ENCODE measurements at regions of chr19 and their contacts with region 1.

Region 1: GRCh38 chr19:24086974-24087595 is at the start of gene ZNF254:
- DNase-seq: peak; percentile 94
- H3K4me3 Mint-ChIP-seq: peak within 1 kb of the TSS; percentile 96
- H3K27ac Mint-ChIP-seq: peak within 1 kb of the TSS; percentile 96
- H3K4me1 Mint-ChIP-seq: no peaks in the 10 kb centered on the region
- H3K27me3 Mint-ChIP-seq: no peaks in the 10 kb centered on the region
- total RNA-seq, gene ZNF254: 10.3 and 10.9 TPM in 2 replicates

Region 2: DNA sequence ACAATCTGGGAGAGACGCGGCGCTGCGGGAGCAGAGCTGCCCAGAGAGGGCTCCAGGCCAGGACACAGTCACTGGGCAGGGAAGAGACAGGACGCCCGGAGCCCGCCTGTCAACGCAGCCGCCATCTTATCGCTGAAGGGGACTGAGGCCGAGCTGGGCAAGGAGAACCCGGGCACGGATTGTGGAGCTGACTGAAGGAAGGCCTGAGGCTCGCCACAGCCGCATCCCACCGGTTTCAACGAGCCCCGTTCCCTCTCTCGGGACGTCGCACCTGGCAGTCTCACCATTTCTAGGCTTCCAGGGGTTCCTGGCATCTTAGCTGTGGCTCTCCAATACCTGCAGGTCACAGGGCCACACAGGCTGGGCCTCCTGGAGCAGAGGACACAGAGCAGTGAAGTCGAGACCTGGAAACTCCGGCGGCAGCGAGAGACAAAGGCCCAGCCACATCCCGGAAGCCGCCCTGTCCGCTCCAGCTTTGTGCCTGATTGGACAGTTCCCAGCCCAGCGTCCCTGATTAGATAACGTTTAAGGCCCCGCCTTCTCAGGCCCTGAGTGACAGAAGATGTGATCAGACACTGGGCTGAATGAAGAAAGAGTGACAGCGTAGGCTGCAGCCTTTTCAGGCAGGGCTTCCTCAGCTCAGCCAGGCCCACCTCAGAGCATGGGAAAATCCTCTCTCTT is 691.9 kb before region 1 on chr19 and contains the start of gene ZNF91:
- intact Hi-C with region 1: loop called (anchors 1 kb)
- DNase-seq: peak; percentile 96
- H3K4me3 Mint-ChIP-seq: peak within 1 kb of the TSS; percentile 97
- H3K27ac Mint-ChIP-seq: peak within 1 kb of the TSS; percentile 98
- H3K4me1 Mint-ChIP-seq: no peaks in the 10 kb centered on the region
- H3K27me3 Mint-ChIP-seq: no peaks in the 10 kb centered on the region
- total RNA-seq, gene ZNF91: 25.0 and 31.1 TPM in 2 replicates

Region 3: DNA sequence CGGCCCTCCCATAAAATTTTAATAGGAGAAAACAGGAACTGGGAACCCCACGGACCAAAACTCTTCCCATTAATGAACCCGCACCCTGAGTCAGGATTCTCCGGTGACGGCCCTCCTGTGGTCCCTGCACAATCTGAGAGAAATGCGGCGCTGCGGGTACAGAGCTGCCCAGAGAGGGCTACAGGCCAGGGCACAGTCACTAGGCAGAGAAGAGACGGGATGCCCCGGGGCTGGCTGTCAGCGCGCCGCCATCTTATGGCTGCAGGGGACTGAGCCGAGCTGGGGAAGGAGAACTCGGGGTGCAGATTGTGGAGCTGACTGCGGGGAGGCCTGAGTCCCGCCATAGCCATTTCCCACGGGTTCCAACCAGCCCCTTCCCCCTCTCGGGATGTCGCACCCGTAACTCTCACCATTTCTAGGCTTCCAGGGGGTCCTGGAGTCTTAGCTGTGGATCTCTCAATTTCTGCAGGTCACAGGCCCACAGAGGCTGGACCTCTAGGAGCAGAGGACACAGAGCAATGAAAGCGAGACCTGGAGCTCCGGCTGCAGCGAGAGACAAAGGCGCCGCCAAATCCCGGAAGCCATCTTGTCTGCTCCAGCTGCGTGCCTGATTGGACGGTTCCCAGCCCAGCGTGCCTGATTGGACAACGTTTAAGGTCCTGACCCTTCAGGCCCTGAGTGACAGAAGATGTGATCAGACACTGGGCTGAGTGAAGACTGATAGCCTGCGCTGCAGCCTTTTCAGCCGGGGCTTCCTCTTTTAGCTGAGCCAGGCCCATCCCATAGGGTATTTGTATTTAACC is 400.3 kb before region 1 on chr19 and contains the start of gene ZNF675:
- intact Hi-C with region 1: loop called (anchors 1 kb)
- DNase-seq: peak; percentile 96
- H3K4me3 Mint-ChIP-seq: peak within 1 kb of the TSS; percentile 97
- H3K27ac Mint-ChIP-seq: peak within 1 kb of the TSS; percentile 99
- H3K4me1 Mint-ChIP-seq: peaks cover 10% of the 10 kb centered on the region
- H3K27me3 Mint-ChIP-seq: no peaks in the 10 kb centered on the region
- total RNA-seq, gene ZNF675: 17.0 and 17.3 TPM in 2 replicates

Region 4: GRCh38 chr19:23758187-23759074 is 328.7 kb before region 1 on chr19 and contains the start of gene ZNF681:
- intact Hi-C with region 1: loop called (anchors 5 kb)
- DNase-seq: peak; percentile 93
- H3K4me3 Mint-ChIP-seq: peak within 1 kb of the TSS; percentile 95
- H3K27ac Mint-ChIP-seq: peak within 1 kb of the TSS; percentile 92
- H3K4me1 Mint-ChIP-seq: peaks cover 8% of the 10 kb centered on the region
- H3K27me3 Mint-ChIP-seq: no peaks in the 10 kb centered on the region
- total RNA-seq, gene ZNF681: 2.6 and 3.0 TPM in 2 replicates

Region 5: DNA sequence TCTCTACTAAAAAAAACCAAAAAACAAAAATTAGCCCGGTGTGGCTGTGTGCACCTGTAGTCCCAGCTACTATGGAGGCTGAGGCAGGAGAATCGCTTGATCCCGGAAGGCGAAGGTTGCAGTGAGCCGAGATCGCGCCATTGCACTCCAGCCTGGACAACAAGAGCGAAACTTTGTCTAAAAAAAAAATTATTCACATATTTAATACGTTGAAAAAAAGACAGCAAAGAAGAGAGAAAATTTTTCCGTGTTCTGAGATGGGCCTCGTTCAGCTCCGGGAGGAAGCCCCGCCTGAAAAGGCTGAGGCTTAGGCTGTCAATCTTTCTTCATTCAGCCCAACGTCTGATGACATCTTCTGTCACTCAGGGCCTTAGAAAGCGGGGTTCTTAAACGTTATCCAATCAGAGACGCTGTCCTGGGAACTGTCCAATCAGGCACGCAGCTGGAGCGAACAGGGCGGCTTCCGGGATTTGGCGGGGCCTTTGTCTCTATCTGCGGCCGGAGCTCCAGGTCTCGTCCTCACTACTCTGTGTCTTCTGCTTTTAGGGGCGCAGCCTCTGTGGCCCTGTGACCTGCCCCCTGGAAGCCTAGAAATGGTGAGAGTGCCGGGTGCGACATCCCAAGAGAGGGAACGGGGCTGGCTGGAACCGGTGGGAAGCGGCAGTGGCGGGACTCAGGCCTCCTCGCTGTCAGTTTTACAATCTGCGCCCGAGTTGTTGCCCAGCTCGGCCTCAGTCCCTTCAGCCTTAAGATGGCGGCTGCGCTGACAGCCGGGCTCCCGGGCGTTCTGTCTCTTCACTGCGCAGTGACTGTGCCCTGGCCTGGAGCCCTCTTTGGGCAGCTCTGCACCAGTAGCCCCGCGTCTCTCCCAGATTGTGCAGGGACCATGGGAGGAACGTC is 172.4 kb before region 1 on chr19 and contains the start of gene ZNF726:
- intact Hi-C with region 1: loop called (anchors 5 kb)
- DNase-seq: peak; percentile 95
- H3K4me3 Mint-ChIP-seq: peak within 1 kb of the TSS; percentile 97
- H3K27ac Mint-ChIP-seq: peak within 1 kb of the TSS; percentile 98
- H3K4me1 Mint-ChIP-seq: peaks cover 2% of the 10 kb centered on the region
- H3K27me3 Mint-ChIP-seq: no peaks in the 10 kb centered on the region
- total RNA-seq, gene ZNF726: 12.8 and 16.3 TPM in 2 replicates

Region 6: DNA sequence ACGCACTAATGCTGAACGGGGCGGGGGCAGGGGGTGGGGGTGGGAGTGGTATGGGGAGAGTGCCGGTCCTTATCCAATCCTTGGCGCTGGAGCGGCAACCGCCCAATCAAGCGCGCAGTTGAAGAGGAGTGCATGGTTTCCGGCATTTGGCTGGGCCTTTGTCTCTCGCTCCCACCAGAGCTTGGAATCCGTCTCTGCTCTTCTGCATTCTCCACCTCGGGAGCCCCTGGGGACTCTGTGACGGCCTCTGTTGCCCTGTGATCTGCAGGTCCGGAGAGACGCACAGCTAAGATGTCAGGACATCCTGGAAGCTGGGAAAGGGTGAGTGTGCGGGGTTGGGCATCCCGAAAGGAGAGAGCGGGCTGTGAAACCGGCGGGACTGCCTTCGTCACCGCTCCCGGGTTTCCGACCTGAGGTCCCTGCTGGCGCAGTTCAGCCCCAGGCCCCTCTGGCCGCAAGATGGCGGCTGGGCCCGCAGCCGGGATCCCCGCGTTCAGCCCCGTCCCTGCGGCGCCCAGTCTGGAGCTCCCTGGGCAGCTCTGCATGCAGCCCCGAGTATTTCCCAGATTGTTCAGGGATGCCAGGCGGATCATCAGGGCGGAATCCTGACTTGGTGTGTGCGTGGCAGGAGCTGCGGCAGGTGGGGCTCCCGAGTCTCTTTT is 53.7 kb before region 1 on chr19:
- intact Hi-C with region 1: loop called (anchors 1 kb)
- DNase-seq: peak; percentile 94
- H3K4me3 Mint-ChIP-seq: peak overlapping the region; percentile 98
- H3K27ac Mint-ChIP-seq: peak overlapping the region; percentile 99
- H3K4me1 Mint-ChIP-seq: peaks cover 23% of the 10 kb centered on the region
- H3K27me3 Mint-ChIP-seq: no peaks in the 10 kb centered on the region

Region 7: GRCh38 chr19:24054549-24054935 is 32.5 kb before region 1 on chr19:
- intact Hi-C with region 1: loop called (anchors 1 kb)
- DNase-seq: no peak
- H3K4me3 Mint-ChIP-seq: no peak overlapping the region
- H3K27ac Mint-ChIP-seq: peak overlapping the region; percentile 80
- H3K4me1 Mint-ChIP-seq: peaks cover 8% of the 10 kb centered on the region
- H3K27me3 Mint-ChIP-seq: no peaks in the 10 kb centered on the region

Region 8: DNA sequence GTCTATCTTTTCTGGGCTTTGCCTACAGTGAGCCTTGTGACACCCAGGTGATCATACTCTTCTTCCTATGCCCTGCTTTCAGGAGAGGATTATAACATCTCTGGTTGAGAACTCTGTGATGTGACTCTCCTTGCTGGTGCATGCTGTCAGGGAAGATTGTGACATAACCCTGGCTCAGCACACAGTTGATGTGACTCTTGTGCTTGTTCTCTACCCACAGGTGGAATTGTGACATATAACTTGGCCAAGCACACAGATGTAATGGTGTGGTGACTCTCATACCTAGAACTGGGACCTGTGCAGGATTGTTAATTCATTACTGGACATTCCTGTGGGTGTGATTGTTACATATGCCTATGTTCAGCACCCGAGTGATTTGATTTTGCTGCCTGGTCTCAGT is 21.8 kb before region 1 on chr19:
- intact Hi-C with region 1: no loop called
- DNase-seq: no peak
- H3K4me3 Mint-ChIP-seq: no peak overlapping the region
- H3K27ac Mint-ChIP-seq: no peak overlapping the region
- H3K4me1 Mint-ChIP-seq: peaks cover 2% of the 10 kb centered on the region
- H3K27me3 Mint-ChIP-seq: no peaks in the 10 kb centered on the region

Region 9: DNA sequence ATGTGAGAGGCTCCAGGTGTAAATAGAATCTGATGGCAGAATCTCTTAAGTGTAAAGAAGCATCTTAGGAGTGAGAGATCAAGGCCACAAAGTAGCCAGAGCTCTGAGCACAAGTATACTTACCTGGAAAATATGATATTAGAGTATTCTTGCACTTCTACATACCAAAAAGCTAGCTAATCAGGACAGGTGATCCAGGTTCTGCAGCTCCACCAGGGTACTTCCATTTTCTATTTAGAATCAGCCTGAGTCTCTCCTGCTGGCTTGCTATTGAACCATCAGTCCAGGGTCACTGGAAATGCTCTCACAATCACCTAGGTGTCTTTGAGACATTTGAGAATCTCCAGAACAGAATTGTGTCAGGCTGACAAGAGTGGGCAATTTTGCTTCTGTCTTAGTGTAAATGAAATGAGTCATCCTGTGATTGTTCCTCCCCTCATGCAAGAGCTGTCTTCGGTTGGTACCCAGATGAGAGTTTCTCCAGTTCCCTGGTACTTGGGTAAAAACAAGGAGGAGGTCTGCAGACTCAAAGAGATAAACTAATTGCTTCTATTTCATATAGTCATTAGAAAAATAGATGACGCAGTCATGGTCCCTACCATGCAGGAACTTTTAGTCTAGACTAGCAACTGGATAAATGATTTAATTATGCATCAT is 14.5 kb after region 1 on chr19:
- intact Hi-C with region 1: no loop called
- DNase-seq: no peak
- H3K4me3 Mint-ChIP-seq: no peak overlapping the region
- H3K27ac Mint-ChIP-seq: no peak overlapping the region
- H3K4me1 Mint-ChIP-seq: peaks cover 2% of the 10 kb centered on the region
- H3K27me3 Mint-ChIP-seq: no peaks in the 10 kb centered on the region

Region 10: GRCh38 chr19:24127601-24128000 is 40.5 kb after region 1 on chr19:
- intact Hi-C with region 1: no loop called
- DNase-seq: no peak
- H3K4me3 Mint-ChIP-seq: no peak overlapping the region
- H3K27ac Mint-ChIP-seq: no peak overlapping the region
- H3K4me1 Mint-ChIP-seq: no peaks in the 10 kb centered on the region
- H3K27me3 Mint-ChIP-seq: no peaks in the 10 kb centered on the region